ENCODE measurements at regions of chr12 and their contacts with region 1.

Region 1: DNA sequence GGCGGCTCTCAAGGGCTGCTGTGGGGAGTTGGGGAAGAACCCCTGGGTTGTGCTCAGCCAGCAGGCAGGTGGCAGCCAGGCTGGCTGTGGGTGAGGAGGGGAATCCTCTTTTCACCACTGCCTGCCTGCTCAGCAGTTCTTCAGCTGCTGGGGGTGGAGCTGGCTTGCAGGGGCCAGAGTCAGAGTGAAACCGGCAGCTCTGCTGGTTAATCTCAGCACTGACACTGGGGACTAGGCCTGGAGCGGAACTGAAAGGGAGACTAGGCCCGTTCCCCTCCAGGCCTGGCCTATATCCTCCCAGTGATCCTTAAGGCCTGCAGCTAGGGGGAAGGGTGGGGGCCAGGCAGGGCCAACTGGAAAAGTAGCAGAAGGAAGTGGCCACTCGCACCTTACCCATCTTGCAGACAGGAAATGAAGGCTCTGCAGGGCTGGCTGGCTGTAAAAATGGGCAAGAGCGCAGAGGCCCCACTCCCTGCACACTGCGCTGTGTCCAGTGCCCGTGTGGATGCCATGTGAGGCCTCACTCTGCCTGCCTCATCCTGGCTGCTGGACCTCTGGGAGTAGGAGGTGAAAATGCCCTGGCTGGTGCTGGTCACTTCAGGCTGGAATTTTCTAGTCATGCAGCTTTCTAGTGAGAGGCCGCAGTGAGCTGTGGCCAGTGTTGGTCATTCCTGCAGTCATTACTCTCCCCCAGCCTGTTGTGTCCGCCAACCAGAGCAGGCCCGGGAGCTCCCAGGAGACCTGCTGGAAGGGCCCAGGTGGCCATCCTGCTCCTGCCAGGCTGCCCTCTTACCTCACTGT is 39.4 kb downstream of the SH2B3 start:
- DNase-seq: peak; percentile 84 to 90 (median 84)
- H3K4me3 ChIP-seq: peak overlapping the region in 1 of 3 experiments; percentile 44
- H3K4me3 Mint-ChIP-seq: peak overlapping the region; percentile 58 to 65
- H3K27ac ChIP-seq: peak overlapping the region; percentile 75 to 88
- H3K27ac Mint-ChIP-seq: peak overlapping the region; percentile 87 to 96 (median 94)
- H3K4me1 ChIP-seq: peaks cover 74 to 80% of the 10 kb centered on the region in 2 donors
- H3K4me1 Mint-ChIP-seq: peaks cover 86% of the 10 kb centered on the region
- H3K27me3 ChIP-seq: no peaks in the 10 kb centered on the region
- H3K27me3 Mint-ChIP-seq: peaks cover 0 to 3% (median 0%) of the 10 kb centered on the region in 3 donors
- CTCF ChIP-seq: peak; percentile 20

Region 2: GRCh38 chr12:111430433-111431353 is 14.4 kb before region 1 on chr12:
- intact Hi-C with region 1: loop called in 1 of 2 experiments (anchors 2 kb)
- DNase-seq: peak; percentile 30 to 74 (median 58)
- H3K4me3 ChIP-seq: peak overlapping the region in 2 of 3 experiments; percentile 7 to 56
- H3K4me3 Mint-ChIP-seq: peak overlapping the region; percentile 66 to 86
- H3K27ac ChIP-seq: peak overlapping the region; percentile 80 to 90
- H3K27ac Mint-ChIP-seq: peak overlapping the region; percentile 87 to 96 (median 93)
- H3K4me1 ChIP-seq: peaks cover 100% of the 10 kb centered on the region in 2 donors
- H3K4me1 Mint-ChIP-seq: peaks cover 99% of the 10 kb centered on the region
- H3K27me3 ChIP-seq: no peaks in the 10 kb centered on the region
- H3K27me3 Mint-ChIP-seq: peaks cover 0 to 2% (median 0%) of the 10 kb centered on the region in 3 donors
- CTCF ChIP-seq: no peak

Measured in CD14-positive monocyte (primary cell).